ENCODE measurements at regions of chr12 and their contacts with region 1.

Region 1: GRCh38 chr12:108514973-108515814 is at the start of gene FICD:
- DNase-seq: peak; percentile 99
- H3K4me3 Mint-ChIP-seq: peak within 1 kb of the TSS; percentile 91
- H3K27ac Mint-ChIP-seq: peak within 1 kb of the TSS; percentile 82
- H3K4me1 Mint-ChIP-seq: peaks cover 23% of the 10 kb centered on the region
- H3K27me3 Mint-ChIP-seq: peaks cover 3% of the 10 kb centered on the region
- total RNA-seq, gene FICD: 6.1 and 6.8 TPM in 2 replicates

Region 2: DNA sequence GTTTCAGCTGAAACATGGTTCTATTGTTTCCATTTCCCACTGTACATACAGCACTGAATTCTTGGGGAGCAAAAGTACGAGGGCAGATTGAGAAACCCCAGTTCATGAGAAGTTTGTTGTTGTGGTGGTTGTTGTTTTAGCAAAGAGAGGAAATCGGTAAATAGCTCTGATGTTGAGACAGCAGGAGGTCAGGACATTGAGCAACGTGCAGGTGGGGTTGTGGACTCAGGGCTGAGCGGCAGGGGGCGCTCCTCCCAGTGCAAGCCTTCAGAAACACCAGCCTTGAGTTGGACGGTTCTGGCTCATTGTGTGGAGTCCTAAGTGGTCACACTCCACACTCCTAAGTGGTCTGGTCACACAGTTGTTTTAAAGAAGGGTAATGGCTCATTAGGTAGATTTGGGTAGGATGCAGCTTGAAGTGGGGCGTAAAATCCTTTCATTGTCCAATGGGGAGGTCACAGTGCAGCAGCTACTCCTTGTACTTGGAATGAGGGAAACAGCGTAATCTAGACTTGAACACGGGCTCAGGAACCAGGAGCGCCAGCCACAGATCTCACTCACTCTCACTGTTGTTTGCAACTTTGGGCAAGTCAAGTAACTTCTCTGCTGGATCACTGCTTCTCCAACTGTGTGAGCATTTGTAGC is 844.1 kb before region 1 on chr12:
- intact Hi-C with region 1: loop called (anchors 1 kb)
- DNase-seq: peak; percentile 29
- H3K4me3 Mint-ChIP-seq: no peak overlapping the region
- H3K27ac Mint-ChIP-seq: peak overlapping the region; percentile 64
- H3K4me1 Mint-ChIP-seq: peaks cover 8% of the 10 kb centered on the region
- H3K27me3 Mint-ChIP-seq: peaks cover 10% of the 10 kb centered on the region

Region 3: DNA sequence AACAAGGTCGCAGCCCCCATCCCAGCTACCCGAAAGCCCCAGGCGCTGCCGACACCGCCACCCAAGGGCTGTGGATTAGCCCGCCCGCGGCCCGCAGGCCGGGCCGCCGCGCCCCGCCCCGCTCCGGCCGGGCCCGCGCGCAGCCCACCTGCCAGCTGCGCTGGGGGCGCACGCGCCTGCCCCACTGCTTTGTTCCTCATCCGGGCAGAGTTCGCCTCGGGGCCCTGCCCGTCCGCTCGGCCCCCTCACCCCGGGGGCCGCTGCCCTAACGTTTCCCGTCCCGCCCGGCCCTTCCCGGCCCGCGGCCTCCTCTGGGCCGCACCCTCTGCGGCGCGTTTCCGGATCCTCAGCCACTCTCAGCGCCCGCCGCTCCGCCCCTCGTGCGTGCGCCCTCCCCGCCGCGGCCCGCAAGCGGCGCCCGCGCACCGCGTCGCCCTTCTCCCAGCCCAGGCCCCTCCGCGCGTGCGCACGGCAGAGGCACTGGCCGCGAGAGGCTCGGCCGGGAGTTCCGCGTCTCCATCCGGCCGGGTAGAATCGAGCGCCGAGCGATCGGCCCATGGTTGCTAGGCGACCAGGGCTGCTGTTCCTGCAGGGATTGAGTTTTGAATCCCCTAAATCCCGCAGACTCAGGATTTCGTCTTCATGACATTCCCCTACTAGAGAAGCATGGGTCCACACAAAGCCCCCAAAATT is 754.2 kb before region 1 on chr12 and contains the start of gene PRDM4:
- intact Hi-C with region 1: loop called (anchors 2 kb)
- DNase-seq: peak; percentile 91
- H3K4me3 Mint-ChIP-seq: peak within 1 kb of the TSS; percentile 92
- H3K27ac Mint-ChIP-seq: peak within 1 kb of the TSS; percentile 89
- H3K4me1 Mint-ChIP-seq: peaks cover 40% of the 10 kb centered on the region
- H3K27me3 Mint-ChIP-seq: peaks cover 3% of the 10 kb centered on the region
- total RNA-seq, gene PRDM4: 28.1 and 30.2 TPM in 2 replicates

Region 4: GRCh38 chr12:108562348-108563135 is 47.3 kb after region 1 on chr12 and contains the start of gene ISCU:
- intact Hi-C with region 1: loop called (anchors 1 kb)
- DNase-seq: peak; percentile 99
- H3K4me3 Mint-ChIP-seq: peak within 1 kb of the TSS; percentile 100
- H3K27ac Mint-ChIP-seq: peak within 1 kb of the TSS; percentile 99
- H3K4me1 Mint-ChIP-seq: peaks cover 58% of the 10 kb centered on the region
- H3K27me3 Mint-ChIP-seq: no peaks in the 10 kb centered on the region
- total RNA-seq, gene ISCU: 73.8 and 74.9 TPM in 2 replicates

Region 5: GRCh38 chr12:108633534-108634248 is 118.5 kb after region 1 on chr12 and contains the start of gene SELPLG:
- intact Hi-C with region 1: loop called (anchors 5 kb)
- DNase-seq: peak; percentile 82
- H3K4me3 Mint-ChIP-seq: peak within 1 kb of the TSS; percentile 94
- H3K27ac Mint-ChIP-seq: peak within 1 kb of the TSS; percentile 99
- H3K4me1 Mint-ChIP-seq: peaks cover 69% of the 10 kb centered on the region
- H3K27me3 Mint-ChIP-seq: no peaks in the 10 kb centered on the region
- total RNA-seq, gene SELPLG: 51.9 and 53.5 TPM in 2 replicates

Region 6: GRCh38 chr12:108803428-108804105 is 288.4 kb after region 1 on chr12:
- intact Hi-C with region 1: loop called (anchors 5 kb)
- DNase-seq: peak; percentile 54
- H3K4me3 Mint-ChIP-seq: no peak overlapping the region
- H3K27ac Mint-ChIP-seq: peak overlapping the region; percentile 77
- H3K4me1 Mint-ChIP-seq: peaks cover 5% of the 10 kb centered on the region
- H3K27me3 Mint-ChIP-seq: no peaks in the 10 kb centered on the region

Region 7: DNA sequence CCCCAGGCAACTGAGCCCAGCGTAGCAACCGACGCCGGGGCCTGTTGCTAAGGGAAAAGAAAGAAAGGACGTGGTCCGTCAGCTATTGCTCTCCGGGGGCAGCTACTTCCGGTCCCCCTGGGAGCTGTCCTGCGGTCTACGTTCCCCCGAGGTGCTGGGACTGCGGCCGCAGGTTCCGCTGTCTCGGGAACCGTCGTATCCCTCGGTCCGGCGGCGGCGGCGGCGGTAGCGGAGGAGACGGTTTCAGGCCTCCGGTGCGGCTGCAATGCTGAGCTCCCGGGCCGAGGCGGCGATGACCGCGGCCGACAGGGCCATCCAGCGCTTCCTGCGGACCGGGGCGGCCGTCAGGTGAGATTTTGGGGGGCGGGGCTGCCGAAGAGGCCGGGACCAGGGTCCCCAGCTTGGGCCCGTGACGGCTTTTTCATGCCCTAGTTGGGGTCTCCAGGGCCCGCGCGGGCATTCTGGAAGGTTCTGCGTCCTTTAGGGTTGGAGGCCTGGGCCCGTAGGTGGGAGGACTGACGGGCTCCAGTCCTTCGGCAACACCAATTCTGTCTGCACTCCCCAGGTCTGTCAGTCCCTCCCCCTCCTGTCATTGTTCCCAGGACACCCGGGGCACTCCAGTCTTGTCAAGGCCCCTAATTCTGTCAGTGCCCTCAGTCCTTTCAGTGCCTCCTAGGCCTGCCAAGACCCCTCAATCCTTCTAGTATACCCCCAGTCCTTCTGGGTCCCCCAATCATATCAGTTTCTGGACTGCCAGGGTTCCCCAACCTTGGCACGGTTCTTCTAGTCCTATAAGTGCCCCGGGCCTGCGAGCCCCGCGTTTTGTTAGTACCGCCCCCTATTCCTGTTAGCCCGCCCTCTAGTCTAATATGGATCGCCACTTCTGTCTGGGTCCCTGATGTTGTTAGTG is 537.5 kb after region 1 on chr12 and contains the start of gene USP30:
- intact Hi-C with region 1: loop called (anchors 1 kb)
- DNase-seq: peak; percentile 77
- H3K4me3 Mint-ChIP-seq: peak within 1 kb of the TSS; percentile 92
- H3K27ac Mint-ChIP-seq: peak within 1 kb of the TSS; percentile 92
- H3K4me1 Mint-ChIP-seq: peaks cover 19% of the 10 kb centered on the region
- H3K27me3 Mint-ChIP-seq: no peaks in the 10 kb centered on the region
- total RNA-seq, gene USP30: 9.0 and 10.5 TPM in 2 replicates